MCF 10A (cell line): ENCODE measurements at regions of chr1 and their contacts with region 1.

Region 1: DNA sequence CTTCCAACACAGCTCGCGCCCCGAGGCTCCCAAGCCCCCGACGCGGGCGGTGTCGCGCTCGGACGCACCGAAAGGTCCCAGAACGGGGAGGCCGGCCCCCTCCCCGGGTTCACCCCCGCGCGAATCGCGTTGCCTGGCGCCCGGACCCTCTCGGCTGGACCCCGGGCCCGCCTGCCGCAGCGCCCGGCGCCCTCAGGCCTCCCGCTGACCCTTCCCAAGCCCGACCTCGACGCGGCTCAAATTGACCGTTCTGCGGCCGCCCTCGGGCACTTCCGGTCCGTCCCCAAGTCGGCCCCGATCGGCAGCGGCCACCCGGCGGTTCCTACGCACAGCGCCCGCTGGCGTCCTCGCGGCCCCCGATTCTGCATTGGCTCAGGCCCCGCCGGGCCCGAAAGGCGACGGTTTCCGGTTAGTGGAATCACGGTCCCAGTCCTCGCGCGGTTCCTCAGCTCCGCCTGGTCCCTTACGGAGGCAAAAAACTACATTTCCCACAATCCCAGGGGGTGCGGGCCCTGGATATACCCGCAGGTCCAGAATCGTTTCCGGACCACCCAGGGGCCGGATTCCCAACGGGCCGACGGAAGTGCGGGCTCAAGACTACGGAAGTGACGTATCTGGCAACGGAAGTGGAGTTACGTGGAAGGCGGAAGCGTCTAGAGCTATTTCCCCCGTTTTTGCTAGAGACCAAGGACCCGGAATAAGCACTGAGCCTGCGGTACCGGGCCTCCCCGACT is at the start of gene AURKAIP1:
- DNase-seq: peak; percentile 99
- H3K4me3 Mint-ChIP-seq: peak within 1 kb of the TSS; percentile 87
- H3K27ac Mint-ChIP-seq: peak within 1 kb of the TSS; percentile 94
- H3K4me1 Mint-ChIP-seq: peaks cover 9% of the 10 kb centered on the region
- H3K27me3 Mint-ChIP-seq: no peaks in the 10 kb centered on the region
- CTCF ChIP-seq: no peak
- total RNA-seq, gene AURKAIP1: 120 and 148 TPM in 2 replicates

Region 2: GRCh38 chr1:1349256-1350012 is 25.7 kb before region 1 on chr1 and contains the start of gene DVL1:
- CTCF ChIA-PET with region 1: interaction called, 9 read pairs
- POLR2A ChIA-PET with region 1: interaction called, 47 read pairs
- intact Hi-C with region 1: no loop called
- DNase-seq: no peak
- H3K4me3 Mint-ChIP-seq: peak within 1 kb of the TSS; percentile 79
- H3K27ac Mint-ChIP-seq: peak within 1 kb of the TSS; percentile 84
- H3K4me1 Mint-ChIP-seq: peaks cover 13% of the 10 kb centered on the region
- H3K27me3 Mint-ChIP-seq: no peaks in the 10 kb centered on the region
- CTCF ChIP-seq: peak; percentile 43
- total RNA-seq, gene DVL1: 96.2 and 113 TPM in 2 replicates

Region 3: DNA sequence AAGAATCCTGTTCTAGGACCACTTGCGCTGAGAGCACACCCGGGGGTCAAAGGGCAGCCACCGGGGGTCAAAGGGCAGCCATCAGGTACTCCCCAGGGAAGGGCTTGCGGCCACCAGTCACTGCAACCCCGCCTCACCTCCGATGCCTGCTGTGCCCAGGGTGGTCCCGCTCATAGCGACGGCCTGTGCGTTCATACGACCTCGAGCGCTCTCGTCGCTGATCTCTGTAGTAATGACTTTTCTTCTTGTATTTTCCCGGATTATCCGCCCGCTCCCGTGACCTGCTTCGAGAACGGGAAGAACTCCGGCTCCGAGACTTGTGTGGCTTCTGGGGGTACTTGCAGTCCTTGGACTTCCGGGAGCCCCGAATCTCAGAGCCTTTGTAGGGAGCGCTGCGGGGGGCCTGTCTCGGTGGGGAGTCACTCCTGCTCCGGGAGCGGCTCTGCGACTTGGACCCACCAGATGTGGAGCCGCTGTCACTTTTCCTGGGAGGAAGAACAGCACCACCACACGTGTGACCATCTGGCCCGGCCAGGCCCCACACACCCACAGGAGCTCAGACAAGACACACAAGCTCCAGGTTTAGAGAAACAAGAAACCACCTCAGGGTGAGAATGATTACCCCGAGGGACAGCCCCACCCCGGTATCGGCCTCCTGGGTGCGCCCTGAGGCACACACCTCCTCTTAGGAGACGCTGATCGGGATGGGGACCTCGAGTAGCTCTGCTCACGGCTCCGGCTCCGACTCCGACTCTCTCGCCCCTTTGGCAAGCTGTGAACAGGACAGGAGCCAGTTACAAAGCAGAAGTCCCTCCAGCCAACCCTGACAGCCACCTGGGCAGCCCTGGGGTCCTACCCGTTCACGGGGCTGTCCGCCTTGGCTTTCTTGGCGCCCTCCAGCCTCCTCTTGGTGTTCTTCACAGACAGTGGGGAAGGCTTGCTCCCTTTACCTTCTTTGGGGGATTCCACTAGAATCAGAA is 12.3 kb after region 1 on chr1:
- CTCF ChIA-PET with region 1: interaction called, 5 read pairs
- POLR2A ChIA-PET with region 1: interaction called, 21 read pairs
- intact Hi-C with region 1: no loop called
- DNase-seq: no peak
- H3K4me3 Mint-ChIP-seq: no peak overlapping the region
- H3K27ac Mint-ChIP-seq: no peak overlapping the region
- H3K4me1 Mint-ChIP-seq: no peaks in the 10 kb centered on the region
- H3K27me3 Mint-ChIP-seq: no peaks in the 10 kb centered on the region
- CTCF ChIP-seq: no peak

Region 4: DNA sequence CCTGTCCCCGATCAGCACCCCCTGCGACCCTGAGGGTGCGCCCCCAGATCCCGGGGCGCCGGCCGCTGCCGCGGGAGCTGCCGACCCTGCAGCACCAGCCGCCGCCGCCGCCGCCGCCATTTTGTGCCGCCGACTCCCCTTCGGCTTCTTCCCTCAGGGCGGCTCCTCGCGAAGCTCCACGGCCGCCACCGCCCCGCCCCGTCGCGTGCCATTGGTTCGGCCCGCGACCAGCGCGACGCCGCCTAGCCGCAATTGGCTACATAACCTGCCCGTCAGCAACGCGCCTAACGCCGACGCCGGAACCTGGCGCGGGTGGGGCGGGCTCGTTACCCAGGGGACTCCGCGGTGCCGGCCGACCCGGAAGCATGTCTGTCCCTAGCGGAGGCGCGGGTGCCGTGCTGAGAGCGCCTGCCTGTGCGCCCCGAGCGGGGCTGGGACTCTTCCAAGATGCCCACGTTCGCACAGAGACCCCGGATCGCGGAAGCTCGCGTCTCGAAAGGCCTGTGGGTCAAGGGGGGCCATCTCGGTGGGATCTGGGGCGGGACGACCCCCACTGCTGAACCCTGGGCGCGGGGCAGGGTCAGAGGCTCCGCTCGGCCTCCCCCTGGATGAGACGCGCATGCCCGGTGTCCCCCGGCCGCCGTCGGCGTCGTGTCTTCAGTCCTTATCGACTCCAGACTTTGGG is 24.2 kb after region 1 on chr1 and contains the start of gene CCNL2:
- CTCF ChIA-PET with region 1: interaction called, 9 read pairs
- POLR2A ChIA-PET with region 1: interaction called, 62 read pairs
- intact Hi-C with region 1: loop called (anchors 2 kb)
- DNase-seq: peak; percentile 97
- H3K4me3 Mint-ChIP-seq: peak within 1 kb of the TSS; percentile 88
- H3K27ac Mint-ChIP-seq: peak within 1 kb of the TSS; percentile 85
- H3K4me1 Mint-ChIP-seq: peaks cover 18% of the 10 kb centered on the region
- H3K27me3 Mint-ChIP-seq: no peaks in the 10 kb centered on the region
- CTCF ChIP-seq: peak; percentile 46
- total RNA-seq, gene CCNL2: 230 and 248 TPM in 2 replicates

Region 5: GRCh38 chr1:1406817-1407635 is 31.9 kb after region 1 on chr1 and contains the start of gene MRPL20:
- CTCF ChIA-PET with region 1: interaction called, 9 read pairs
- POLR2A ChIA-PET with region 1: interaction called, 28 read pairs
- intact Hi-C with region 1: no loop called
- DNase-seq: peak; percentile 89
- H3K4me3 Mint-ChIP-seq: peak within 1 kb of the TSS; percentile 83
- H3K27ac Mint-ChIP-seq: peak within 1 kb of the TSS; percentile 94
- H3K4me1 Mint-ChIP-seq: peaks cover 11% of the 10 kb centered on the region
- H3K27me3 Mint-ChIP-seq: no peaks in the 10 kb centered on the region
- CTCF ChIP-seq: no peak
- total RNA-seq, gene MRPL20: 131 and 137 TPM in 2 replicates

Region 6: GRCh38 chr1:1510912-1511532 is 135.9 kb after region 1 on chr1:
- CTCF ChIA-PET with region 1: no interaction called
- POLR2A ChIA-PET with region 1: interaction called, 9 read pairs
- intact Hi-C with region 1: loop called (anchors 10 kb)
- DNase-seq: peak; percentile 22
- H3K4me3 Mint-ChIP-seq: peak overlapping the region; percentile 86
- H3K27ac Mint-ChIP-seq: peak overlapping the region; percentile 96
- H3K4me1 Mint-ChIP-seq: no peaks in the 10 kb centered on the region
- H3K27me3 Mint-ChIP-seq: no peaks in the 10 kb centered on the region
- CTCF ChIP-seq: no peak

Region 7: DNA sequence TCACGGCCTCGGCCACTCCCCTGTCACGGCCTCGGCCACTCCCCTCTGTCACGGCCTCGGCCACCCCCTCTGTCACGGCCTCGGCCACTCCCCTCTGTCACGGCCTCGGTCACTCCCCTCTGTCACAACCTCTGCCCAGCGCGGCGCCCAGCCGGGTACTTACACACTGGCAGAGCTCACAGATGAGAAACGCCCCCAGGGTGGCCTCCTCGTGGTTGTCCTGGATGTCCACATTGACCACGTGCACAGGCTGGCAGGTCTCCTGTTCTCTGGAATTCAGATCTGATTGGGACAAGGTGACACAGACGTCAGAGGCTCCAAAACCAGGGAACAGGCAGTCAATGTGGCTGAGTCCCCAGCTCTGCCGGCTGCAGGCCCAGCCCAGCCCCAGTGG is 168.6 kb after region 1 on chr1:
- CTCF ChIA-PET with region 1: no interaction called
- POLR2A ChIA-PET with region 1: no interaction called
- intact Hi-C with region 1: no loop called
- DNase-seq: no peak
- H3K4me3 Mint-ChIP-seq: no peak overlapping the region
- H3K27ac Mint-ChIP-seq: no peak overlapping the region
- H3K4me1 Mint-ChIP-seq: no peaks in the 10 kb centered on the region
- H3K27me3 Mint-ChIP-seq: no peaks in the 10 kb centered on the region
- CTCF ChIP-seq: no peak